Activated CD4-positive, alpha-beta memory T cell treated with anti-CD3 and anti-CD28 coated beads for 36 hours (primary cell): ENCODE measurements at regions of chr6 and their contacts with region 1.

Region 1: GRCh38 chr6:36302227-36302976 is 32.5 kb downstream of the PNPLA1 start:
- DNase-seq: peak; percentile 94
- H3K4me3 Mint-ChIP-seq: no peak overlapping the region
- H3K27ac Mint-ChIP-seq: no peak overlapping the region
- H3K4me1 Mint-ChIP-seq: peaks cover 4% of the 10 kb centered on the region
- H3K27me3 Mint-ChIP-seq: peaks cover 14% of the 10 kb centered on the region

Region 2: DNA sequence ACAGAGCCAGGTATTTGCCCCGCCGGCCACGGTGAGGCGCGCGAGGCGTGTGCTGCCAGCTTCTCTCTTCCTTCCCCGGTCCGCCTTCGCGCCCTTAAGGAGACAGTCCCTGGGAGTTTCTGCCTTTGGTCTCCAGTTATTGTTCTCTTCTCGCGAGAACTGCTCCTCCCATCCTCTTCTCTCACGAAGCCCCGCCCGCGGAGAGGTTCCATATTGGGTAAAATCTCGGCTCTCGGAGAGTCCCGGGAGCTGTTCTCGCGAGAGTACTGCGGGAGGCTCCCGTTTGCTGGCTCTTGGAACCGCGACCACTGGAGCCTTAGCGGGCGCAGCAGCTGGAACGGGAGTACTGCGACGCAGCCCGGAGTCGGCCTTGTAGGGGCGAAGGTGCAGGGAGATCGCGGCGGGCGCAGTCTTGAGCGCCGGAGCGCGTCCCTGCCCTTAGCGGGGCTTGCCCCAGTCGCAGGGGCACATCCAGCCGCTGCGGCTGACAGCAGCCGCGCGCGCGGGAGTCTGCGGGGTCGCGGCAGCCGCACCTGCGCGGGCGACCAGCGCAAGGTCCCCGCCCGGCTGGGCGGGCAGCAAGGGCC is 274.8 kb before region 1 on chr6 and contains the start of gene MAPK14:
- CTCF ChIA-PET with region 1: interaction called, 10 read pairs
- POLR2A ChIA-PET with region 1: no interaction called
- intact Hi-C with region 1: loop called (anchors 1 kb)
- DNase-seq: peak; percentile 99
- H3K4me3 Mint-ChIP-seq: peak within 1 kb of the TSS; percentile 98
- H3K27ac Mint-ChIP-seq: peak within 1 kb of the TSS; percentile 97
- H3K4me1 Mint-ChIP-seq: peaks cover 28% of the 10 kb centered on the region
- H3K27me3 Mint-ChIP-seq: peaks cover 12% of the 10 kb centered on the region
- total RNA-seq, gene MAPK14: 39.3 to 44.0 TPM

Region 3: GRCh38 chr6:36285797-36286196 is 16.6 kb before region 1 on chr6:
- CTCF ChIA-PET with region 1: interaction called, 33 read pairs
- POLR2A ChIA-PET with region 1: no interaction called
- intact Hi-C with region 1: no loop called
- DNase-seq: no peak
- H3K4me3 Mint-ChIP-seq: no peak overlapping the region
- H3K27ac Mint-ChIP-seq: no peak overlapping the region
- H3K4me1 Mint-ChIP-seq: peaks cover 8% of the 10 kb centered on the region
- H3K27me3 Mint-ChIP-seq: peaks cover 30% of the 10 kb centered on the region

Region 4: DNA sequence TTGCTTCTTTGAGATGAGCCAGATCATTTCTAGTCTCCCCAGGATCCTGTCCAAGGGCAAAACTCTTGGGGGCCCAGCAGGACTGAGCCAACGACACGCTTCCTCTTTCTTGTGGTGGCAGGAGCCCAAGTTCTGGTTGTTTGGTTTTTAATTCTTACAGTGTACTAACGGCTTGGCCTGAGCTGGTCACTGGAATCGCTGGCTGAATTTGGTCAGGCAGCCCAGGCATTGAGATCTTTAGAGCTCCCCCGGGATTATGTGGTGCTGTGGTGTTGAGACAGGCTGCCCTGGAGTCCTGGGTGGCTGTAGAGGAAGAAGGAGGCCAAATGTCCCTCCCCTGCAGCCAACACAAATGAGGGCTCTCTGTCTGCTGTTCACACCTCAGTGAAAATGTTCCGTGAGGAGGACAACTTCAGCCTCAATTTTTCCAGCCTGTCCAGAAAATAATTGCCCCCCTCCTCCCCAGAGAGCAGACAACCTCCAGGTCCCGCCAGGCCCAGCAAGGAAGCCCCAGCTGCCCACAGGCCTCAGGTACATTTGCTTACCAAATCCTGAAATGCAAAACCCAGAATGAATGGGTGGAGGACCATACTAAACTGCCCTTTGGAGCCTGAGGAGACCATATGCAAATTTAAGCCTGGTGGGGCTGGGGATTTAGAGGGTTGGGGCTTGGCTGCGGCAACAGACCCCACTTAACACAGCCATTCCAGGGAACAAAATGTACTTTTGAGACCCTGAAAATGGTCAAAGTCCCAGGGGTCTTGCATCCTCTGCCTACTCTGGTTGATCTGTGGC is 10.6 kb after region 1 on chr6:
- CTCF ChIA-PET with region 1: interaction called, 20 read pairs
- POLR2A ChIA-PET with region 1: no interaction called
- intact Hi-C with region 1: no loop called
- DNase-seq: no peak
- H3K4me3 Mint-ChIP-seq: no peak overlapping the region
- H3K27ac Mint-ChIP-seq: no peak overlapping the region
- H3K4me1 Mint-ChIP-seq: no peaks in the 10 kb centered on the region
- H3K27me3 Mint-ChIP-seq: no peaks in the 10 kb centered on the region

Region 5: DNA sequence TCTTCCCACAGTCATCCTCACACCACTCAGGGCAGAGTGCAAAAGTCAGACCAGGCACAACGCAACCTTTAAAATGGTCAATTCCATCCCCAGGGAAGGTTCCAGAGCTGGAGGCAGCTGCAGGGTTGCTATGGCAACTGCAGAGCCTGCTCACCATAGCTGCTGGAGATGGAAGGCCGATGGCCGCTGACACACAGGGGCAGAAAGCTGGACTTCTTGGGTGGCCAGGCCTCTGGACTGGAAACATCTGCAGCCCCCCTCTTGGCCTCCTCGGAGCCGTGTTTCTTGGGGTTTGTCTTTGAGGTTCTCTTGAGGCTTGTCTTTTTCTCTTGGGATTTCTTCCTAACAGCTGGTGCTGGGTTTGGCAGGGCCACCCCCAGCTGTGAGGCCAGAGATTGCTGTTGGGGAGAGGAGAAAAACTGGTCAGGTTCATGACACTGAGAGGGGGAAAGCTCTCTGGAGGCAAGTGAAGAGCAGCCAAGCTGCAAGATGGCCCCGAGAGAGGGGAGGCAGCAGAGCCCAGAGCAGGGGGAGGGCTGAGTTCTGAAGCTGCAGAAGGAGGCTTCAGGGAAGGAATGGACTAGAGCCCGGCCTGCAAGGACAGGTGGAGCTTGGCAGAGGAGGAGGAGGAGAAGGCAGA is 24.1 kb after region 1 on chr6:
- CTCF ChIA-PET with region 1: interaction called, 11 read pairs
- POLR2A ChIA-PET with region 1: no interaction called
- intact Hi-C with region 1: no loop called
- DNase-seq: no peak
- H3K4me3 Mint-ChIP-seq: no peak overlapping the region
- H3K27ac Mint-ChIP-seq: no peak overlapping the region
- H3K4me1 Mint-ChIP-seq: no peaks in the 10 kb centered on the region
- H3K27me3 Mint-ChIP-seq: no peaks in the 10 kb centered on the region

Region 6: DNA sequence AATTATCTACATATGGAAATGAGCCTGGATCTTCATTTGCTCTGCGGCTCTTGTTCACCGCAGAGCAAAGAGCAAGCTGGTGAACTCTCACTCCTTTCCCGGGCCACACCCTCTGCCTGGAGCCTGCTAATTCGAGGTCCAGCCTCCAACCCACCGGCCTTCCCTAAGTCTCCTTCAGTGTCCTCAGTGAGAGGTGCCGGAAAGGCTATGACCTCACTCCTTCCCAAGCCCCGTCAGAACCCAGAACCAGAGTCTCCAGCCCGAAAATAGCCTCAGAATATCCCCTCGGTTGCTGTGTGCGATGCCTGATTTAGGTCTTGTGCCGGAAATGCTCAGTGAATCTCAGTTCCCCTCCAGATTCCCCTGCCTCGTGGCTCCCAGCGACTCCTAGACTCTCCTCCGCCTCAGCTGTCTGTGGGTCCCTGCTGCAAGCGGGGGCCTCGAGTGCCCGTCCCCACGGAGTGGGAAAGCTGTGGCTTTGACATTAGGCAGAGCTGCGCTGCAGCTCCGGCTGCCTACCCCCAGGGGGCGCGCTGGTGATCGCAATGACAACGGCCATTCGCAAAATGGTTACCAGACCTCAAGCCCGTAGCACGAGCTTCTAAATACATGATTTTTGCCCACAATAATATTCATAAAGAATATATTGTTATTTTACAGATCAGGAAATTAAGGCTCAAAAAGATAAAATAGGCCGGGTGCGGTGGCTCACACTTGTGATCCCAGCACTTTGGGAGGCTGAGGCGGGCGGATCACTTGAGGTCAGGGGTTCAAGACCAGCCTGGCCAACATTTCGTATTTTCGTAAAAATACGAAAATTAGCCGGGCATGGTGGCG is 38.4 kb after region 1 on chr6:
- CTCF ChIA-PET with region 1: interaction called, 14 read pairs
- POLR2A ChIA-PET with region 1: no interaction called
- intact Hi-C with region 1: no loop called
- DNase-seq: peak; percentile 80
- H3K4me3 Mint-ChIP-seq: no peak overlapping the region
- H3K27ac Mint-ChIP-seq: no peak overlapping the region
- H3K4me1 Mint-ChIP-seq: peaks cover 13% of the 10 kb centered on the region
- H3K27me3 Mint-ChIP-seq: peaks cover 11% of the 10 kb centered on the region

Region 7: DNA sequence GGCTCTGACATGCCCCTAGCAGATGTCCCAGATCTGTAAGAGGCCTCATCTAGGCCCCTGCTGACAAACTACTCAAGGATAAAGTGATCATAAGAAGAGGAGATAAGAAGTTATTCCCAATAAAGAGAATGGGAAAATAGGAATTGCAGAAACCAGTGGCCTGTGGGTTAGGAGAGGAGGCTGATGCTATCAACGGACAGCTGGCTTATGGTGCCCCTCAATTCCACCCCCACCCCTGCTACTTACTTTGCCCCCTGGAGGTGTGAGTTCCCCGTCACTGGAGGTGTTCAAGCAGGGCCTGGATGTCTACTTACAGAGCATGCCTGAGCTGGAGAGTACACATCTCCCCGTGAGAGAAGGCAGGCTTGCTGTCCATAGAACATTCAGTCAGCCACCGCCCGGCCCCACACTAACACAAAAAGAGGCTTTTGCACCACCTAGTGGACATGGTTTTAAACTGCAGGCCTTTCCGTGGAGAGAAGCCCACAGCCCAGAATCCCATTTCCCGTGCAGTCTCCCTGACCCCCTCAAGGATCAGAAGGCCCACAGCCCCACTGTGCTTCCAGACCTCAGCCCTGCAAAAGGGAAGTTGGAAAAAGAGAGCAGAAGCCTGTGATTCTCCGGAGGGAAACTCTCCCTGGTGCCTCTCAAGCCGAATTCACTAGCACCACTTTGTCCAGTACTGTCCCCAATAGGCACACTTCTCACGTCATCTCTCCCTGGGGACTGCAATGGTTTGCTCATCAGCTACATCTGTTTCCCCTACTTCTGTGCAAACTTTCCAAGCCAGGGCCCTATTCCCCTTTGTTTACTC is 58.0 kb after region 1 on chr6:
- CTCF ChIA-PET with region 1: interaction called, 160 read pairs
- POLR2A ChIA-PET with region 1: interaction called, 3 read pairs
- intact Hi-C with region 1: loop called (anchors 1 kb)
- DNase-seq: peak; percentile 79
- H3K4me3 Mint-ChIP-seq: no peak overlapping the region
- H3K27ac Mint-ChIP-seq: no peak overlapping the region
- H3K4me1 Mint-ChIP-seq: peaks cover 24% of the 10 kb centered on the region
- H3K27me3 Mint-ChIP-seq: peaks cover 3% of the 10 kb centered on the region